A549 (cell line): ENCODE measurements at regions of chr18 and their contacts with region 1.

Region 1: GRCh38 chr18:62584241-62585120 is 61.7 kb downstream of the ZCCHC2 start:
- DNase-seq: peak; percentile 80 to 85
- ATAC-seq: peak; percentile 88 to 94
- H3K4me3 ChIP-seq: no peak overlapping the region
- H3K27ac ChIP-seq: 0 out of 6 replicates have a peak overlapping the region, but pooled peaks have one; percentile 22 to 42
- H3K4me1 ChIP-seq: peaks cover 4% of the 10 kb centered on the region; the same call in 1 of the 3 replicates
- CTCF ChIP-seq: peak; percentile 79
- EP300 ChIP-seq: no peak
- POLR2A ChIP-seq: no peak
- RAD21 ChIP-seq: peak; percentile 72 to 82

Region 2: DNA sequence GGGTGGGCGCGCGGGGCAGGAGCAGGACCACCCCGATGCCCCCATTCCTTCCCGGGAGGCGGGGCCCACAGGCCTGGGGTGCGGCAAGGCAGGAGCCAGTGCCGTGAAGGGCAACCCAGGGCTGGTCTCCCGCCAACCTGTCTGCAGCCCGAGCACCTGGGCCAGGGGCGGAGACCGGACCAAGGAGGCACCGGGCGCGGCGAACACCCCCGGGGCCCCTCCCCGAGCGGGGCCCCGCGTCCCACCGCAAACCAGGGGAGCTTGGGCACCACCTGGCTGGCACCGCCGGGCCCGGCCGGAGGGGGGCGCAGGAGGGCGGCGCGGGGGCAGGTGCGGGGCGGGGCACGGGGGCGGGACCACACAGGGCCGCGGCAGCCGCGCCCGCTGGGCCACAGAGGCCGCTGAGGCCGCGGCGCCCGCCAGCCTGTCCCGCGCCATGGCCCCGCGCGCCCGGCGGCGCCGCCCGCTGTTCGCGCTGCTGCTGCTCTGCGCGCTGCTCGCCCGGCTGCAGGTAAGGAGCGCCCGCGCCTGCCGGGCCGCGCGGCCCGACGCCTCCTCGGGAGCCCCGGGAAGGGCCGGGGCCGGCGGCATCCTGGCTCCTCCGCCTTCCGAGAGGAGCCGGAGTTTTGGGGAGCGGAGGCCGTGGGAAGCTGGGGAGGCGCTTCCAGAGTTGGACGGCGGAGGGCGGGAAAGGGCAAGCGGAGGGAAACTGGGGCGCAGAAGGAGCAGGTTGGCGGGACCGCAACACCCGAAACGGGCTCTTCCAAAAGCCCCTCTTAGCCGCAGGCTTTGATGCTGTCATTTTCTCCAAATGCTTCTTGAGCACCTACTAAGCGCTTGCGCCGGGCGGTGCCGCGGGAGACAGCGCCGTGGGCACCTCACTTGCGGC is 259.3 kb before region 1 on chr18 and contains the start of gene TNFRSF11A:
- CTCF ChIA-PET with region 1: interaction called, 10 read pairs
- POLR2A ChIA-PET with region 1: no interaction called
- DNase-seq: peak; percentile 38 to 57
- ATAC-seq: peak; percentile 89 to 90
- H3K4me3 ChIP-seq: peak within 1 kb of the TSS; percentile 70
- H3K27ac ChIP-seq: peak within 1 kb of the TSS; percentile 72 to 81
- H3K4me1 ChIP-seq: peaks cover 19% of the 10 kb centered on the region
- CTCF ChIP-seq: peak; percentile 61
- EP300 ChIP-seq: no peak
- POLR2A ChIP-seq: peak; percentile 66
- RAD21 ChIP-seq: peak; percentile 26 to 32; a peak in 3 of 5 replicates
- polyA plus RNA-seq, gene TNFRSF11A: 4.0 and 5.2 TPM in 2 replicates

Region 3: GRCh38 chr18:62566199-62566598 is 18.3 kb before region 1 on chr18:
- CTCF ChIA-PET with region 1: interaction called, 17 read pairs
- POLR2A ChIA-PET with region 1: no interaction called
- DNase-seq: peak; percentile 13 to 42
- ATAC-seq: peak in 1 of 2 experiments; percentile 47; a peak in 1 of 6 replicates
- H3K4me3 ChIP-seq: no peak overlapping the region
- H3K27ac ChIP-seq: no peak overlapping the region
- H3K4me1 ChIP-seq: no peaks in the 10 kb centered on the region
- CTCF ChIP-seq: peak; percentile 11; the same call in 1 of the 3 replicates
- EP300 ChIP-seq: no peak
- POLR2A ChIP-seq: no peak
- RAD21 ChIP-seq: no peak; a peak in 1 of 5 replicates

Region 4: GRCh38 chr18:62571648-62572047 is 12.8 kb before region 1 on chr18:
- CTCF ChIA-PET with region 1: interaction called, 26 read pairs
- POLR2A ChIA-PET with region 1: no interaction called
- DNase-seq: no peak
- ATAC-seq: no peak
- H3K4me3 ChIP-seq: no peak overlapping the region
- H3K27ac ChIP-seq: no peak overlapping the region
- H3K4me1 ChIP-seq: no peaks in the 10 kb centered on the region
- CTCF ChIP-seq: no peak
- EP300 ChIP-seq: no peak
- POLR2A ChIP-seq: no peak
- RAD21 ChIP-seq: no peak

Region 5: GRCh38 chr18:62982600-62983251 is 398.2 kb after region 1 on chr18:
- CTCF ChIA-PET with region 1: interaction called, 61 read pairs
- POLR2A ChIA-PET with region 1: no interaction called
- DNase-seq: peak; percentile 27 to 44
- ATAC-seq: peak in 1 of 2 experiments; percentile 80; a peak in 3 of 6 replicates
- H3K4me3 ChIP-seq: no peak overlapping the region
- H3K27ac ChIP-seq: 0 out of 6 replicates have a peak overlapping the region, but pooled peaks of 1 of the 2 experiments have one; percentile 27
- H3K4me1 ChIP-seq: peaks cover 11% of the 10 kb centered on the region; the same call in 2 of the 3 replicates
- CTCF ChIP-seq: peak; percentile 75
- EP300 ChIP-seq: no peak
- POLR2A ChIP-seq: no peak
- RAD21 ChIP-seq: peak; percentile 85